B cell (primary cell): ENCODE measurements at regions of chr2 and their contacts with region 1.

Region 1: DNA sequence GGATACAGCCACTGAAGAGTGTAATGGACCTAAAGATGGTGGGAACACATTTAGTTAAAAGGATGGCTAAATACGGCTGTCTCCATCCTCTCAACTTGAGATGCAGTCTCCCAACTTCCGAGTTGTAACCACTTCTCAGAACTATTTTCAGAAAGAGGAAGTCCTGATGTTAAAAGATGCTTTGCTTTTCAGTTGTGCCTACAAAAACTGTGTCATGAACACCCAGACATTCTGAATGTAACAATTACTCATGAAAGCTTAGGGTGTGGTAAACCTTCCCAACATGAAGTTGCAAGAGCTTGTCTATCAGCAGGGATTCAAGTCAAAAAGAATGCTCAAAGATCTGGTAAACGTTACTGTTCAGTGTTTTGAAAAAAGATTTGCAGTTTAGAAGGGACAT is 147.9 kb downstream of the DOCK10 start:
- DNase-seq: peak; percentile 75
- ATAC-seq: peak; percentile 78
- H3K4me3 ChIP-seq: peak overlapping the region in 2 of 5 experiments; percentile 1 to 16
- H3K4me3 Mint-ChIP-seq: peak overlapping the region; percentile 77
- H3K27ac ChIP-seq: peak overlapping the region; percentile 74 to 86
- H3K27ac Mint-ChIP-seq: peak overlapping the region; percentile 93
- H3K4me1 ChIP-seq: peaks cover 25 to 26% of the 10 kb centered on the region in 2 donors
- H3K4me1 Mint-ChIP-seq: peaks cover 48% of the 10 kb centered on the region
- H3K27me3 ChIP-seq: no peaks in the 10 kb centered on the region
- H3K27me3 Mint-ChIP-seq: no peaks in the 10 kb centered on the region
- CTCF ChIP-seq: no peak

Region 2: DNA sequence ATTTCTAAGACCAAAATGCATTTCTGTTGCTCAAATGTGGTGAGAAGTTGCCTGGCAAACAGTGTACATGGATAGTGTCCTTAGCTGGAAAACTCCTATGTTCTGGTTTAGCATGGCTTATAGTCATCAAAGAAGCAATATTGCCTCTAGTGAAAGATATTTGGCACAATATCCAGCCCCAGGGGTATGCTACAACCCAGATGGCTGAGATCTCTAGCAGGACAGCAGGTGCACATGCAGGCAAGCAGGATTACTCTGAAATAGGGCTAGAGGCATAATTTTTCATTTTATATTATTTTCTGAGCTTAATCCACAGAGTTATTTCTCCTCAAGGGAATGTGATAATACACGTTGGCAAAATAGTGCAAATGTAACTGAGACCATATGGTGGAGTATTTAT is 212.2 kb before region 1 on chr2:
- CTCF ChIA-PET with region 1: no interaction called
- POLR2A ChIA-PET with region 1: no interaction called
- intact Hi-C with region 1: no loop called
- DNase-seq: no peak
- ATAC-seq: no peak
- H3K4me3 ChIP-seq: no peak overlapping the region
- H3K4me3 Mint-ChIP-seq: no peak overlapping the region
- H3K27ac ChIP-seq: no peak overlapping the region
- H3K27ac Mint-ChIP-seq: no peak overlapping the region
- H3K4me1 ChIP-seq: no peaks in the 10 kb centered on the region
- H3K4me1 Mint-ChIP-seq: no peaks in the 10 kb centered on the region
- H3K27me3 ChIP-seq: no peaks in the 10 kb centered on the region
- H3K27me3 Mint-ChIP-seq: no peaks in the 10 kb centered on the region
- CTCF ChIP-seq: no peak

Region 3: GRCh38 chr2:224909885-224910573 is 15.7 kb after region 1 on chr2:
- CTCF ChIA-PET with region 1: no interaction called
- POLR2A ChIA-PET with region 1: interaction called, 3 read pairs
- intact Hi-C with region 1: loop called (anchors 2 kb)
- DNase-seq: peak; percentile 37
- ATAC-seq: peak; percentile 81
- H3K4me3 ChIP-seq: no peak overlapping the region
- H3K4me3 Mint-ChIP-seq: peak overlapping the region; percentile 60
- H3K27ac ChIP-seq: peak overlapping the region in 1 of 2 donors; percentile 7
- H3K27ac Mint-ChIP-seq: peak overlapping the region; percentile 88
- H3K4me1 ChIP-seq: peaks cover 9 to 13% of the 10 kb centered on the region in 2 donors
- H3K4me1 Mint-ChIP-seq: peaks cover 35% of the 10 kb centered on the region
- H3K27me3 ChIP-seq: no peaks in the 10 kb centered on the region
- H3K27me3 Mint-ChIP-seq: no peaks in the 10 kb centered on the region
- CTCF ChIP-seq: no peak

Region 4: GRCh38 chr2:224922142-224922727 is 27.9 kb after region 1 on chr2:
- CTCF ChIA-PET with region 1: interaction called, 5 read pairs
- POLR2A ChIA-PET with region 1: no interaction called
- intact Hi-C with region 1: loop called (anchors 2 kb)
- DNase-seq: peak; percentile 63
- ATAC-seq: peak; percentile 64
- H3K4me3 ChIP-seq: peak overlapping the region in 1 of 5 experiments; percentile 4
- H3K4me3 Mint-ChIP-seq: peak overlapping the region; percentile 66
- H3K27ac ChIP-seq: peak overlapping the region; percentile 40 to 54
- H3K27ac Mint-ChIP-seq: peak overlapping the region; percentile 84
- H3K4me1 ChIP-seq: peaks cover 64 to 68% of the 10 kb centered on the region in 2 donors
- H3K4me1 Mint-ChIP-seq: peaks cover 55% of the 10 kb centered on the region
- H3K27me3 ChIP-seq: no peaks in the 10 kb centered on the region
- H3K27me3 Mint-ChIP-seq: no peaks in the 10 kb centered on the region
- CTCF ChIP-seq: no peak